K562 (cell line): ENCODE measurements at regions of chr19 and their contacts with region 1.

Region 1: DNA sequence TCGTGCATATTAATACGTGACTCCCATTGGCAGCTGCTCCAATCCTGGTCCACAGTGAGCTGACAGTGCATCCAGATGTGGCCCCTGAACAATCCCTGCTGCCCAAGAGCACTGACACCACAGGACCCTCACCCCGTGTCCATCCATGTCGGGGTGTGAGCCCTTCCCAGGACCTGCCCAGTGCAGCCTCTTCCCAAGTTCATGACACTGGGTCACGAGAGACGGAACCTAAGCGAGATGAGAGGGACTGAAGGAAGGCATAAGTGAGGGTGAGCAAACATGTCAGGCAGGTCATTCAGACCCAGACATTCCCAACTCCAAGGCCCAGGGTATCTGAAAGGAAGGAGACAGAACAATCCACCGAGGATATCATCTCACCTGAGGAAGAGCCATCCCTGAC is 3.5 kb downstream of the ZNF468 start:
- DNase-seq: no peak
- ATAC-seq: no peak
- H3K4me3 ChIP-seq: no peak overlapping the region
- H3K27ac ChIP-seq: no peak overlapping the region
- H3K4me1 ChIP-seq: peaks cover 2 to 14% of the 10 kb centered on the region in 2 experiments; a peak in 4 of 5 replicates
- H3K27me3 ChIP-seq: no peaks in the 10 kb centered on the region
- CTCF ChIP-seq: no peak
- EP300 ChIP-seq: no peak
- POLR2A ChIP-seq: no peak
- RAD21 ChIP-seq: no peak

Region 2: GRCh38 chr19:52823676-52824075 is 30.2 kb before region 1 on chr19:
- CTCF ChIA-PET with region 1: no interaction called
- POLR2A ChIA-PET with region 1: interaction called, 4 read pairs
- in situ Hi-C with region 1: loop called (anchors 5 kb)
- intact Hi-C with region 1: no loop called
- DNase-seq: no peak
- ATAC-seq: no peak
- H3K4me3 ChIP-seq: no peak overlapping the region
- H3K27ac ChIP-seq: no peak overlapping the region
- H3K4me1 ChIP-seq: peaks cover 0 to 13% of the 10 kb centered on the region in 2 experiments; a peak in 2 of 5 replicates
- H3K27me3 ChIP-seq: no peaks in the 10 kb centered on the region
- CTCF ChIP-seq: no peak
- EP300 ChIP-seq: no peak
- POLR2A ChIP-seq: no peak
- RAD21 ChIP-seq: no peak

Region 3: DNA sequence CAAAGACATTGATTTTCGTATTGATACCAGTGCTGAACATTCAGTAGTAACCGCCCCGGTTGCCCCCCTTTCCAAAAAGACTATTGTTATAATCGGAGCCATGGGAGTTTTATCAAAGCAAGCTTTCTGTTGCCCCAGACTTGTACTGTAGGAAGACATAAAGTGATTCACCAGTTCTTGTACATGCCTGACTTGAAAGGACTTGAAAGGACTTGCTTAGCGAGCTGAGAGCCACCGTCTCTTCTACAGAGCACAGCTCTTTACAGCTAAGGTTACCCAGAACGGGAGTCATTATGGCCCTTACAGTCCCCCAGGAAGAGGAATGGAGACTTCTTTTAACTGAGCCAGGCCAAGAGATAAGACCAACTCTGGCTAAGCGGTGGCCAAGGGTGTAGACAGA is 103.7 kb after region 1 on chr19:
- CTCF ChIA-PET with region 1: no interaction called
- POLR2A ChIA-PET with region 1: no interaction called
- in situ Hi-C with region 1: no loop called
- intact Hi-C with region 1: no loop called
- DNase-seq: no peak
- ATAC-seq: no peak
- H3K4me3 ChIP-seq: no peak overlapping the region
- H3K27ac ChIP-seq: no peak overlapping the region
- H3K4me1 ChIP-seq: peaks cover 0 to 8% of the 10 kb centered on the region in 2 experiments; a peak in 3 of 5 replicates
- H3K27me3 ChIP-seq: no peaks in the 10 kb centered on the region
- CTCF ChIP-seq: no peak
- EP300 ChIP-seq: no peak
- POLR2A ChIP-seq: no peak
- RAD21 ChIP-seq: no peak